WTC11 (cell line): ENCODE measurements at regions of chr15 and their contacts with region 1.

Region 1: GRCh38 chr15:56017920-56018319 is 24.5 kb upstream of the NEDD4 start:
- DNase-seq: no peak
- ATAC-seq: 0 out of 2 replicates have a peak, but pooled peaks have one; percentile 44
- H3K4me3 Mint-ChIP-seq: no peak overlapping the region
- H3K27ac Mint-ChIP-seq: no peak overlapping the region
- H3K4me1 Mint-ChIP-seq: no peaks in the 10 kb centered on the region
- H3K27me3 Mint-ChIP-seq: peaks cover under 1% of the 10 kb centered on the region; the same call in 1 of the 2 replicates
- CTCF ChIP-seq: no peak

Region 2: GRCh38 chr15:55993111-55993803 is 24.7 kb before region 1 on chr15 and contains the start of gene NEDD4:
- CTCF ChIA-PET with region 1: interaction called, 11 read pairs
- POLR2A ChIA-PET with region 1: no interaction called
- DNase-seq: peak; percentile 79
- ATAC-seq: peak; percentile 85
- H3K4me3 Mint-ChIP-seq: peak within 1 kb of the TSS; percentile 79
- H3K27ac Mint-ChIP-seq: no peak within 1 kb of the TSS
- H3K4me1 Mint-ChIP-seq: peaks cover 16% of the 10 kb centered on the region
- H3K27me3 Mint-ChIP-seq: peaks cover 45% of the 10 kb centered on the region
- CTCF ChIP-seq: no peak
- total RNA-seq, gene NEDD4: 2.7 to 4.5 TPM (median 3.8 TPM) in 3 replicates

Region 3: GRCh38 chr15:56052395-56053045 is 34.6 kb after region 1 on chr15:
- CTCF ChIA-PET with region 1: interaction called, 13 read pairs
- POLR2A ChIA-PET with region 1: no interaction called
- DNase-seq: no peak
- ATAC-seq: peak; percentile 61
- H3K4me3 Mint-ChIP-seq: no peak overlapping the region
- H3K27ac Mint-ChIP-seq: no peak overlapping the region
- H3K4me1 Mint-ChIP-seq: no peaks in the 10 kb centered on the region
- H3K27me3 Mint-ChIP-seq: no peaks in the 10 kb centered on the region
- CTCF ChIP-seq: peak; percentile 45